Activated CD8-positive, alpha-beta T cell treated with anti-CD3 and anti-CD28 coated beads, Interleukin-2, amount 10 ng/mL, durations not matched to agents 7 days and 5 days (primary cell): ENCODE measurements at regions of chr4 and their contacts with region 1.

Region 1: DNA sequence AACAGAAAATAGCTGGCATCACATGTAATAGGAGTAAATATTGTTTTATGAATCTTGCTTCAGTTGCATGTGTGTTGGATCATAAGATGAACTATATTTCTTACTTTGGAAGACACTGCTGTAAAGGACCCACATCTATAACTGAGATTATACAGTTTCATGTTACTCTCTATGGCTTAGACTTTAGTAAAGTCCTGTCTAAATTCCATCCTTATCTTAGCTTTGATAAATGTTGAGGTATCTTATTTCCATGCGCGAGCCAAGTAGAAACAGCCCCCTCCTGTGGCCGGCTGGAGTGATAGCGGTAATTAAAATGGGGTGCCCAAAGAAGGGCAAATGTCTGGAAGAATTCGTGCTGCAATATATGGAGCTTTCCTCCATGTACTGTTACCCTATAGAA is 43.0 kb downstream of the CCDC158 start:
- DNase-seq: peak; percentile 64
- ATAC-seq: no peak
- H3K4me3 Mint-ChIP-seq: no peak overlapping the region
- H3K27ac Mint-ChIP-seq: no peak overlapping the region
- H3K4me1 Mint-ChIP-seq: no peaks in the 10 kb centered on the region
- H3K27me3 Mint-ChIP-seq: peaks cover 10% of the 10 kb centered on the region

Region 2: DNA sequence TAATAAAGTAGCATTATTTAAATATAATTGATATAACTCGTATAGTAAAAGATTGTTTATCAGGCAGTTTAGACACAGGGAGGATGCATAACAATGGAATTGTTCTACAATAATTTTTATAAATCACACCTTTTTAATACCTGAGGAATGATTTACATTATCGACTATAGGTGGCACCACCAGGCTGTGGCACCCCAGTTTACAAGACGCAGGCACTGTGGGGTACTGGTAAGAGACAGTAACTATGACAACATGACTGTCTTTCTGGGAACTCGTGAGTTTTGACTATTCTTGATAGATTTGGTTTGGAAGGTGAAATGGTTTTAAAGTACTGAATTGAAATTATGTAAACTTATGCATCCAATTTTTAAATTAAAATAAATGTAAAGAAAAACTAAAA is 98.4 kb before region 1 on chr4:
- CTCF ChIA-PET with region 1: interaction called, 71 read pairs
- POLR2A ChIA-PET with region 1: no interaction called
- DNase-seq: peak; percentile 47
- ATAC-seq: no peak
- H3K4me3 Mint-ChIP-seq: no peak overlapping the region
- H3K27ac Mint-ChIP-seq: no peak overlapping the region
- H3K4me1 Mint-ChIP-seq: peaks cover 8% of the 10 kb centered on the region
- H3K27me3 Mint-ChIP-seq: peaks cover 24% of the 10 kb centered on the region

Region 3: DNA sequence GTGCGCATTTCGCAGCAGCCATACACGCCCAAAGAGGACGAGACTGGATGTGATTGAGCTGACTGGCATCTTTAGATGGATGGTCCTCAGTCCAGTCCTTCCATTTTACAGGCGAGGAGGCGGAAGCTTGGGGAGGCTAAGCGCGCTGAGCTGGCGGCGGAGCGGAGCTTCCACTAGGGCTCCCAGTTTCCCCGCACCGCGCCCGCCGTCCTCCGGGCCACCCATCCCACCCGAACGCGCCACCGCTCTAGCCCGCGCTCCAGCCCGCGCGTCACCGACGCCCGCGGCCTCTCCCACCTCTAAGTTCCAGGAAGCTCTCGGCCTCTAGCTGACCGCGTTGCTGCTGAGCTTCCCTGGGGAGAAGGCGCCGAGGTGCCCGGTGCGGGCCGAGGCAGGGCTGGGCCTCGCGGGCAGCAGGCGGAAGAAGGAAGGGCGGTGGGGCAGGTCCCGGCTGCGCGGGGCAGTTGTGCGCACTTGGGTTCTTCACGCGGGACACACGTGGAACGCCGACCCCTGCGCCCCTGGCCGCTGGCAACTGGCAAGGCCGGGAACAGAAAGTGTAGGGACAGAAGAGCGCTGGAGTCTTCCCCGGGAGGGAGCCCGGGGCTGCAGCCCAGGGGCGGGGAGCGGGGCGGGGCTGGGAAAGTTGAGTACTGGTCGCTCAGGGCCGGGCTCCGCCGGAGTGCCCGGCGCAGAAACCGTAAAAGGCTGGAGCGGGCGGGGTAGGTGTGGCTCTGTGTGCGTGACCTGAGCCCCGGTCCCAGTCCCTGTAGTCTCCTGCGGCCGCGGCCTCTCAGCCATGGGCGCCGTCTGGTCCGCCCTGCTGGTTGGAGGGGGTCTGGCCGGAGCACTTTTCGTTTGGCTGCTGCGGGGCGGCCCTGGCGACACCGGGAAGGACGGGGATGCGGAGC is 71.7 kb before region 1 on chr4 and contains the start of gene STBD1:
- CTCF ChIA-PET with region 1: interaction called, 40 read pairs
- POLR2A ChIA-PET with region 1: no interaction called
- DNase-seq: peak; percentile 46
- ATAC-seq: peak; percentile 66
- H3K4me3 Mint-ChIP-seq: peak within 1 kb of the TSS; percentile 64
- H3K27ac Mint-ChIP-seq: peak within 1 kb of the TSS; percentile 79
- H3K4me1 Mint-ChIP-seq: peaks cover 43% of the 10 kb centered on the region
- H3K27me3 Mint-ChIP-seq: peaks cover 26% of the 10 kb centered on the region
- total RNA-seq, gene STBD1: 1.5 to 1.6 TPM

Region 4: GRCh38 chr4:76341063-76341462 is 36.8 kb before region 1 on chr4:
- CTCF ChIA-PET with region 1: interaction called, 12 read pairs
- POLR2A ChIA-PET with region 1: interaction called, 3 read pairs
- DNase-seq: no peak
- ATAC-seq: no peak
- H3K4me3 Mint-ChIP-seq: no peak overlapping the region
- H3K27ac Mint-ChIP-seq: no peak overlapping the region
- H3K4me1 Mint-ChIP-seq: no peaks in the 10 kb centered on the region
- H3K27me3 Mint-ChIP-seq: peaks cover 8% of the 10 kb centered on the region

Region 5: DNA sequence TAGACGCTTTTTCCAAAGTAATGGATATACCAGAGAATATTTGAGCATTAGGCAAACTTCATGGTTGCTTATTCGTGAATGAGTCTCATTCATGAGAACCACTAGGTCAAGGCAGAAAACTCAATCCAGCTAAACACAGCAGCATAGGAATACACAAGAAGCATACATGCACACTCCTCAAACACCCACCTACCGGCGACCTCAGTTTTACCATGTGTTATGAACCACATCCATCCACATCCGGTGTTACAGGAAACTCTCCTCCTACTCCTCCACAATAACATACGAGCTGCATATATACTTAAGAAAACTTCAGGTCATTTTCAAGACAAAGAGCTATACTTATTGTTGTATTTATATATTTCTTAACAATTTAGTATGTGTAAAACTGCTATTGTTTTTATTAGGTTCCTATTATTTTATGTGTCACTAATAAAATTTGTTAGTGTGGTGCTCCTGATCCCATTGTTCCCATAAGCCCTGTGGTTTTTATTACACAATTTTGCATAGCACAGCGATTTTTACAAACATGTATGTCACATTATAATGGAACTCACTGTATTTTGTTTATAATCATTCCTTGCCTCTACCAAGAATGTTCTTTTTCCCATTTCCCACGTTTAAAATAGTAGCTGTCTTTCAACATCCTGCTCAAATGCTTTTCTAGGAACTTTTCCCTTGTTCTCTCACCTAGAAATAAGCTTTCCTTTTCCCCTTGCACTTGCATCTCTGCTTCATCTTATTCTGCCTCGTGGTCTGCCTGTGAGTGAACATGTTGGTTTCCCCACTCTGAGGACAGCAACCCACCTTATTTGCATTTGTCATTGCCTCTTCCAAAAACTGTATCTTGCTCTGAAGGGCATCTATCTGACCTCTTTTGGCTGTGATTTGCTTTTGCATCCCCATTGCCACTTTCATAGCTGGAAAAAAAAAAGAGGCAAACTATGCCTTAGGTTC is 23.1 kb before region 1 on chr4:
- CTCF ChIA-PET with region 1: interaction called, 13 read pairs
- POLR2A ChIA-PET with region 1: no interaction called
- DNase-seq: peak; percentile 57
- ATAC-seq: peak; percentile 81
- H3K4me3 Mint-ChIP-seq: no peak overlapping the region
- H3K27ac Mint-ChIP-seq: peak overlapping the region; percentile 48
- H3K4me1 Mint-ChIP-seq: peaks cover 14% of the 10 kb centered on the region
- H3K27me3 Mint-ChIP-seq: peaks cover 6% of the 10 kb centered on the region

Region 6: GRCh38 chr4:76499461-76499860 is 121.5 kb after region 1 on chr4:
- CTCF ChIA-PET with region 1: no interaction called
- POLR2A ChIA-PET with region 1: no interaction called
- DNase-seq: no peak
- ATAC-seq: no peak
- H3K4me3 Mint-ChIP-seq: no peak overlapping the region
- H3K27ac Mint-ChIP-seq: no peak overlapping the region
- H3K4me1 Mint-ChIP-seq: no peaks in the 10 kb centered on the region
- H3K27me3 Mint-ChIP-seq: peaks cover 18% of the 10 kb centered on the region